Testis (tissue), 5 donors: ENCODE measurements at regions of chr3 and their contacts with region 1.

Region 1: GRCh38 chr3:157130467-157131251 is 29.3 kb downstream of the CCNL1 start:
- DNase-seq: peak; percentile 73
- H3K4me3 ChIP-seq: peak overlapping the region; percentile 7 to 23
- H3K27ac ChIP-seq: peak overlapping the region; percentile 84 to 86
- H3K4me1 ChIP-seq: peaks cover 63% of the 10 kb centered on the region
- H3K27me3 ChIP-seq: no peaks in the 10 kb centered on the region
- CTCF ChIP-seq: peak; percentile 55 to 70 (median 68)
- POLR2A ChIP-seq: no peak

Region 2: DNA sequence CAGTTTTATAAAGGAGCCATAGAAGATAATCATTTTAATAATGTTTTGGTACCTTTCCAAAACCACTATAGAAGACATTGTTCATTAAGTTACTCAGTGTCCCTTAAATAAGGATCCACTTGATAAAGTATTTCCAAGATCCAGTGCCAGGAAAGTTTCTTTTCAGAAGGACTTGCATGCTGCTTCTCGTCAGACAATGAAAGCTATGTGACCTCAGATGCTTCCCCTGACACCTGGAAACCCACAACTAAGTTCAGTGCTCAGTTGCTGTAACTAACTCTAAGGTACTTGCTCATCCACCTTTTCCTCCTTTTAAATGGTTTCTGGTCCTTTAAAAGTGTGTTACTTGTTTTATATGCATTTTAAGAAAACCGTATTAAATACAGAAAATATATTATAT is 583.0 kb before region 1 on chr3:
- intact Hi-C with region 1: loop called (anchors 10 kb)
- DNase-seq: peak; percentile 41
- H3K4me3 ChIP-seq: no peak overlapping the region
- H3K27ac ChIP-seq: peak overlapping the region; percentile 75
- H3K4me1 ChIP-seq: peaks cover 55% of the 10 kb centered on the region
- H3K27me3 ChIP-seq: no peaks in the 10 kb centered on the region
- CTCF ChIP-seq: no peak
- POLR2A ChIP-seq: no peak

Region 3: GRCh38 chr3:157088601-157089454 is 41.8 kb before region 1 on chr3:
- intact Hi-C with region 1: loop called (anchors 2 kb)
- DNase-seq: peak; percentile 96
- H3K4me3 ChIP-seq: peak overlapping the region; percentile 60 to 64
- H3K27ac ChIP-seq: peak overlapping the region; percentile 97 to 99
- H3K4me1 ChIP-seq: peaks cover 40% of the 10 kb centered on the region
- H3K27me3 ChIP-seq: no peaks in the 10 kb centered on the region
- CTCF ChIP-seq: peak in 1 of 3 experiments; percentile 44
- POLR2A ChIP-seq: no peak